ENCODE measurements at regions of chr10 and their contacts with region 1.

Region 1: GRCh38 chr10:11424456-11425297 is 186.8 kb downstream of the USP6NL start:
- DNase-seq: peak; percentile 42
- H3K4me3 ChIP-seq: no peak overlapping the region
- H3K27ac ChIP-seq: no peak overlapping the region
- H3K4me1 ChIP-seq: no peaks in the 10 kb centered on the region
- H3K27me3 ChIP-seq: no peaks in the 10 kb centered on the region
- CTCF ChIP-seq: peak; percentile 85

Region 2: DNA sequence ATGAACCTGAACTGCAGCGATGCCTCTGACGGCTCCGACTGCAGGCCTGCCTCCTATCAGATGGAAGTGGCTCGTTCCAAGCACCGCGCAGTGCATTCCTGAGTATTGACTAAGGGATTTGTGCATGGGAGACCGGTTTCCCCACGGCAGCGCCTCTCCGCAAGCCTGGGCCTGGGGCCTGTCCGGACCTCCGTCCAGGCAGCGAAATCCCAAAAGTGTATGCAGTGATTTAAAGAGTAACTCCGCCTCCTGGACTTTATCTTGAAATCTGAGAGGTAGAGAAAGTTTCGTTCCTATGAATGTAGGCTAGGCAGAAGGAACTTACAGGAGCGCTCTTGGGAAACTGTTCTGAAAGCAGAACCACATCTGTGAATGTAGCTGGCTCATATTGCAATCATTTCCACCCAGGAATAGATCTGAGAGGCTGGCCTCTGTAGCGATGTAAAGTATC is 513.2 kb before region 1 on chr10:
- intact Hi-C with region 1: no loop called
- DNase-seq: peak; percentile 38
- H3K4me3 ChIP-seq: no peak overlapping the region
- H3K27ac ChIP-seq: no peak overlapping the region
- H3K4me1 ChIP-seq: no peaks in the 10 kb centered on the region
- H3K27me3 ChIP-seq: no peaks in the 10 kb centered on the region
- CTCF ChIP-seq: no peak

Region 3: GRCh38 chr10:11472158-11472753 is 47.6 kb after region 1 on chr10:
- intact Hi-C with region 1: loop called (anchors 5 kb)
- DNase-seq: peak; percentile 66
- H3K4me3 ChIP-seq: no peak overlapping the region
- H3K27ac ChIP-seq: no peak overlapping the region
- H3K4me1 ChIP-seq: no peaks in the 10 kb centered on the region
- H3K27me3 ChIP-seq: no peaks in the 10 kb centered on the region
- CTCF ChIP-seq: peak; percentile 72

Region 4: GRCh38 chr10:11757821-11758463 is 333.3 kb after region 1 on chr10:
- intact Hi-C with region 1: loop called (anchors 5 kb)
- DNase-seq: peak; percentile 93
- H3K4me3 ChIP-seq: no peak overlapping the region
- H3K27ac ChIP-seq: peak overlapping the region; percentile 24
- H3K4me1 ChIP-seq: no peaks in the 10 kb centered on the region
- H3K27me3 ChIP-seq: no peaks in the 10 kb centered on the region
- CTCF ChIP-seq: peak; percentile 95